K562 (cell line): ENCODE measurements at regions of chrX and their contacts with region 1.

Region 1: GRCh38 chrX:37578045-37578444 is 6.6 kb downstream of the LANCL3 start:
- DNase-seq: no peak
- ATAC-seq: no peak
- H3K4me3 ChIP-seq: no peak overlapping the region
- H3K27ac ChIP-seq: no peak overlapping the region
- H3K4me1 ChIP-seq: no peaks in the 10 kb centered on the region; a peak in 2 of 5 replicates
- H3K27me3 ChIP-seq: no peaks in the 10 kb centered on the region
- CTCF ChIP-seq: no peak
- EP300 ChIP-seq: no peak
- POLR2A ChIP-seq: no peak
- RAD21 ChIP-seq: no peak

Region 2: DNA sequence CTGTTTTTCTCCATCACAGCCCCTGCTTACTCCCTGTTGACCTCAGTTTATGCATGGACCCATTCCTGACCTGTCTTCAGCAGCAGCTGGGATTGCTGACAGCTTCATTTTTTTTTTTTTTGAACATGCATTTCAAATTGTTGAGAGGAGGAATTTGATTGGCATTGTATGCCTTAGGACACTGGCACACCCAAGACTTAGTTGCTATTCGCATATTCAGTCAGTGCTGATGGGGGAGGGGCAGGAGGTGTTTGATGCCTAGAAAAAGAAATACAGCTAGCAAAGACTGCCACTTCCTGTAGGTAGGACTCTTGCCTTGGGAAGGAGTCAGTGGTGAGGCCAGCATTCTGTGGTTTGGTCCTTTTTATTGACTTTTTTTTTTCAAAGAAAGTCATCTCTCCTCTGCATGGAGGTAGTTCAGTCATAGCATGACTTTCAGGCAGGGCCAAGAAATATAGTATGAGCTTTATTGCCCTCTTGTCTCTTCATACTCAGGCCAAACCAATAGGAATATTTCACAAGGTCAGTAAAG is 73.9 kb after region 1 on chrX:
- CTCF ChIA-PET with region 1: no interaction called
- POLR2A ChIA-PET with region 1: no interaction called
- in situ Hi-C with region 1: no loop called
- intact Hi-C with region 1: loop called (anchors 5 kb)
- DNase-seq: peak in 1 of 4 experiments; percentile 23
- ATAC-seq: peak; percentile 26
- H3K4me3 ChIP-seq: no peak overlapping the region
- H3K27ac ChIP-seq: peak overlapping the region; percentile 92
- H3K4me1 ChIP-seq: peaks cover 3 to 28% of the 10 kb centered on the region in 2 experiments; a peak in 3 of 5 replicates
- H3K27me3 ChIP-seq: no peaks in the 10 kb centered on the region
- CTCF ChIP-seq: no peak
- EP300 ChIP-seq: no peak
- POLR2A ChIP-seq: no peak
- RAD21 ChIP-seq: no peak

Region 3: GRCh38 chrX:37685452-37686353 is 107.7 kb after region 1 on chrX and contains the start of gene XK:
- CTCF ChIA-PET with region 1: no interaction called
- POLR2A ChIA-PET with region 1: no interaction called
- in situ Hi-C with region 1: no loop called
- intact Hi-C with region 1: loop called (anchors 5 kb)
- DNase-seq: peak; percentile 69 to 84 (median 76)
- ATAC-seq: peak; percentile 83
- H3K4me3 ChIP-seq: peak within 1 kb of the TSS; percentile 54
- H3K27ac ChIP-seq: peak within 1 kb of the TSS; percentile 90
- H3K4me1 ChIP-seq: peaks cover 10 to 20% of the 10 kb centered on the region in 2 experiments; a peak in 4 of 5 replicates
- H3K27me3 ChIP-seq: no peaks in the 10 kb centered on the region
- CTCF ChIP-seq: no peak
- EP300 ChIP-seq: no peak
- POLR2A ChIP-seq: peak; percentile 64
- RAD21 ChIP-seq: no peak
- polyA plus RNA-seq, gene XK: 4.0 to 6.0 TPM

Region 4: DNA sequence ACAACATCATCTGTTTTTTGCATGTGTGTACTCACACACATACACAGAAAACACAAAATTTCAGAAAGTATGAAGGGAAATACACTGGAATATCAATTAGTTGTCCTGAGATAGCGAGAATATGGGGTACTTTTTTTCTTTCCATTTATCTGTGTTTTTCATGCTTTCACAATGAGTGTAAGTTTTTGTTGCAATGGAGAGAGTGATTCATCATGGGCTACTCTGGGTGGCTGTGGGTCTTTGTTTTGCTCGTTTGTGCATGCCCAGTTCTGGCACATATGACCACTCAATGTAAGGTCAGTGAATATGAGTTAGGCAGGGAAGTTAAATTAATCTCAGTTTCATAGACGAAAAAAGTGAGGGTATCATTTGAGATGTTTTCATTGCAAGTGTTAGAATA is 134.4 kb after region 1 on chrX:
- CTCF ChIA-PET with region 1: no interaction called
- POLR2A ChIA-PET with region 1: no interaction called
- in situ Hi-C with region 1: no loop called
- intact Hi-C with region 1: loop called (anchors 10 kb)
- DNase-seq: no peak
- ATAC-seq: no peak
- H3K4me3 ChIP-seq: no peak overlapping the region
- H3K27ac ChIP-seq: no peak overlapping the region
- H3K4me1 ChIP-seq: peaks cover 0 to 22% of the 10 kb centered on the region in 2 experiments; a peak in 2 of 5 replicates
- H3K27me3 ChIP-seq: no peaks in the 10 kb centered on the region
- CTCF ChIP-seq: no peak
- EP300 ChIP-seq: no peak
- POLR2A ChIP-seq: no peak
- RAD21 ChIP-seq: no peak

Region 5: GRCh38 chrX:37745354-37745753 is 167.3 kb after region 1 on chrX:
- CTCF ChIA-PET with region 1: no interaction called
- POLR2A ChIA-PET with region 1: no interaction called
- in situ Hi-C with region 1: no loop called
- intact Hi-C with region 1: loop called (anchors 5 kb)
- DNase-seq: peak; percentile 54 to 72 (median 68)
- ATAC-seq: peak; percentile 95
- H3K4me3 ChIP-seq: no peak overlapping the region
- H3K27ac ChIP-seq: no peak overlapping the region
- H3K4me1 ChIP-seq: no peaks in the 10 kb centered on the region
- H3K27me3 ChIP-seq: no peaks in the 10 kb centered on the region
- CTCF ChIP-seq: peak; percentile 76 to 80 (median 80)
- EP300 ChIP-seq: no peak
- POLR2A ChIP-seq: no peak
- RAD21 ChIP-seq: peak; percentile 85 to 89